GM10248 (cell line): ENCODE measurements at regions of chr11 and their contacts with region 1.

Region 1: DNA sequence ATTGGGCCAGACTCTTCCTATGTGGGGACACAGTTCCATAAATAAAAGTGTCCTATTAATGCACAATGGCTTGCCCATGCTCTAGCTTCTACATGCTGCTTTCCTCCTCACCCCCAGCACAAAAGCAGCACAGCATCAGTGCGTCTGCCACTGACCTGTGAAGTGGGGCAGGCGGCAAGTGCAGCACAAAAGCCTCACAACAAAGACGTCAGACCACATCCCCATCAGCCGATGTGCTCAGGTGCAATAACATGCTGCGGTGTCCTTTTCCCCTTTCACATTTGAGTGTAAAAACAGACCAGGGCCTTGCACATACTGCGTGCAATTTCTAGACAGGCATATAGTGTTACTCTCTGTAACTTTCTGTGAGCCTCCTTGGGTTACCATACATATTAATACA is 12.8 kb downstream of the DKK3 start:
- DNase-seq: no peak
- CTCF ChIP-seq: no peak

Region 2: GRCh38 chr11:11860103-11860979 is 135.3 kb before region 1 on chr11:
- CTCF ChIA-PET with region 1: no interaction called
- POLR2A ChIA-PET with region 1: no interaction called
- DNase-seq: no peak
- CTCF ChIP-seq: no peak

Region 3: GRCh38 chr11:12019337-12019736 is 23.7 kb after region 1 on chr11:
- CTCF ChIA-PET with region 1: no interaction called
- POLR2A ChIA-PET with region 1: interaction called, 15 read pairs
- DNase-seq: no peak
- CTCF ChIP-seq: no peak